H1 (cell line): ENCODE measurements at regions of chr16 and their contacts with region 1.

Region 1: GRCh38 chr16:86252596-86252995 is 257.7 kb upstream of the FOXF1 start:
- DNase-seq: peak; percentile 9 to 82
- H3K4me3 ChIP-seq: no peak overlapping the region
- H3K27ac ChIP-seq: no peak overlapping the region
- H3K4me1 ChIP-seq: no peaks in the 10 kb centered on the region
- H3K27me3 ChIP-seq: no peaks in the 10 kb centered on the region
- CTCF ChIP-seq: peak; percentile 84 to 85 (median 85)
- EP300 ChIP-seq: no peak; a peak in 1 of 3 replicates
- POLR2A ChIP-seq: no peak
- RAD21 ChIP-seq: peak; percentile 89 to 91

Region 2: GRCh38 chr16:86072328-86073102 is 180.1 kb before region 1 on chr16:
- CTCF ChIA-PET with region 1: interaction called, 11 read pairs
- POLR2A ChIA-PET with region 1: no interaction called
- DNase-seq: peak in 1 of 2 experiments; percentile 80
- H3K4me3 ChIP-seq: no peak overlapping the region
- H3K27ac ChIP-seq: no peak overlapping the region
- H3K4me1 ChIP-seq: peaks cover 2 to 15% (median 5%) of the 10 kb centered on the region in 4 experiments; a peak in 6 of 7 replicates
- H3K27me3 ChIP-seq: peaks cover 0 to 2% (median 0%) of the 10 kb centered on the region in 4 experiments; a peak in 2 of 7 replicates
- CTCF ChIP-seq: peak; percentile 69 to 79 (median 70)
- EP300 ChIP-seq: no peak
- POLR2A ChIP-seq: no peak
- RAD21 ChIP-seq: peak; percentile 79 to 83

Region 3: GRCh38 chr16:86214326-86215232 is 38.0 kb before region 1 on chr16:
- CTCF ChIA-PET with region 1: interaction called, 10 read pairs
- POLR2A ChIA-PET with region 1: no interaction called
- DNase-seq: no peak
- H3K4me3 ChIP-seq: no peak overlapping the region
- H3K27ac ChIP-seq: no peak overlapping the region
- H3K4me1 ChIP-seq: no peaks in the 10 kb centered on the region; a peak in 1 of 7 replicates
- H3K27me3 ChIP-seq: no peaks in the 10 kb centered on the region; a peak in 1 of 7 replicates
- CTCF ChIP-seq: no peak
- EP300 ChIP-seq: no peak
- POLR2A ChIP-seq: no peak
- RAD21 ChIP-seq: no peak

Region 4: GRCh38 chr16:86270696-86271095 is 18.1 kb after region 1 on chr16:
- CTCF ChIA-PET with region 1: interaction called, 27 read pairs
- POLR2A ChIA-PET with region 1: no interaction called
- DNase-seq: no peak
- H3K4me3 ChIP-seq: no peak overlapping the region
- H3K27ac ChIP-seq: no peak overlapping the region
- H3K4me1 ChIP-seq: peaks cover 0 to 3% (median 2%) of the 10 kb centered on the region in 4 experiments; a peak in 3 of 7 replicates
- H3K27me3 ChIP-seq: no peaks in the 10 kb centered on the region
- CTCF ChIP-seq: no peak
- EP300 ChIP-seq: no peak
- POLR2A ChIP-seq: no peak
- RAD21 ChIP-seq: no peak

Region 5: GRCh38 chr16:86292171-86292775 is 39.7 kb after region 1 on chr16:
- CTCF ChIA-PET with region 1: interaction called, 13 read pairs
- POLR2A ChIA-PET with region 1: no interaction called
- DNase-seq: peak in 1 of 2 experiments; percentile 20
- H3K4me3 ChIP-seq: no peak overlapping the region
- H3K27ac ChIP-seq: no peak overlapping the region
- H3K4me1 ChIP-seq: peaks cover 2 to 18% (median 10%) of the 10 kb centered on the region in 4 experiments
- H3K27me3 ChIP-seq: peaks cover 28 to 50% (median 45%) of the 10 kb centered on the region in 4 experiments
- CTCF ChIP-seq: no peak
- EP300 ChIP-seq: no peak
- POLR2A ChIP-seq: no peak
- RAD21 ChIP-seq: no peak